Ovary (tissue), 10 donors: ENCODE measurements at regions of chr1 and their contacts with region 1.

Region 1: GRCh38 chr1:205477759-205478247 is 22.0 kb upstream of the BLACAT1 start:
- DNase-seq: peak in 2 of 5 donors; percentile 50 to 56
- H3K4me3 ChIP-seq: no peak overlapping the region
- H3K27ac ChIP-seq: no peak overlapping the region
- H3K4me1 ChIP-seq: peaks cover 5% of the 10 kb centered on the region
- H3K27me3 ChIP-seq: no peaks in the 10 kb centered on the region
- CTCF ChIP-seq: no peak
- EP300 ChIP-seq: no peak
- POLR2A ChIP-seq: no peak

Region 2: DNA sequence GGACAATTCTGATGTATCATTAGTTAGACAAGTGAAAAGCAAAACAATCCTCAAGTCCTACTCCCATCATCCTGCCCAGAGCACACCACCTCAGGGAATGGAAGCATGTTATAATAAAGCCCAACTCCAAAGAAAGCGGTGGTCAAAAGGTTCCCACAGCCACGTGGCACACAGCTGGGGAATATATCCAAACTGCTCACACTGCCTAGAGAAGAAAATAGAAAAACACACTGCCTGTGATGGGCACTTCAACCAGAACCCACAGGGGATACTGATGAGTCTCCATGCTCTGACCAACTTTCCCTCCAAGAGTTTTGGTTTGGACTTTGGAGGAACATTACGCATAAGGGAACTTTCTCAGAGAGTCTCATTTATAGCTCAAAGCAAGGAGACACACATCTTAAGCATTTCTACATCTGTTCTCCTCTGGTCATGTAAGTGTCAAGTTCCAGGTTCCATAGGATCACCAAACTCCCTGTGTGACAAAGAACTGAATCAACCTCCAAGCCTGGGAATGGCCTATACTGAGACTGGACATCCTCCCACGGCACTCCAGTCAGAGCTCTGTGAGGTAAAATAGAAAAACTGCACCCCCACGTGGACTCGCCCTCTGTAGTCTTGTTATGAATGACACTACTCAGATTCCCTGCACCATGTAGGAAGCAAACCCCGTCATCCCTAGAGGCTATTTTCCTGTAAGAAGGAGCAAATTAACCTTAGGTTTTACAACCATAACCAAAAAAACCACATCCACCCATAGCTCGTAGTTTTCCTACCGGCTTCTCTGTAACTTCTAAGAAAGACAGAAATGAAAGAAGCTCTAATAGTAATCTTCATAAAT is 278.5 kb before region 1 on chr1:
- intact Hi-C with region 1: no loop called
- DNase-seq: no peak
- H3K4me3 ChIP-seq: no peak overlapping the region
- H3K27ac ChIP-seq: no peak overlapping the region
- H3K4me1 ChIP-seq: peaks cover 5% of the 10 kb centered on the region
- H3K27me3 ChIP-seq: no peaks in the 10 kb centered on the region
- CTCF ChIP-seq: no peak
- EP300 ChIP-seq: no peak
- POLR2A ChIP-seq: no peak

Region 3: GRCh38 chr1:205335643-205336091 is 142.1 kb before region 1 on chr1:
- intact Hi-C with region 1: loop called in 2 of 4 experiments (anchors 5 kb)
- DNase-seq: peak; percentile 85 to 91 (median 86)
- H3K4me3 ChIP-seq: no peak overlapping the region
- H3K27ac ChIP-seq: no peak overlapping the region
- H3K4me1 ChIP-seq: peaks cover 5% of the 10 kb centered on the region
- H3K27me3 ChIP-seq: no peaks in the 10 kb centered on the region
- CTCF ChIP-seq: peak; percentile 91 to 95 (median 92)
- EP300 ChIP-seq: no peak
- POLR2A ChIP-seq: no peak

Region 4: GRCh38 chr1:205396967-205397616 is 80.7 kb before region 1 on chr1:
- intact Hi-C with region 1: loop called in 2 of 4 experiments (anchors 5 to 10 kb)
- DNase-seq: peak in 1 of 5 donors; percentile 44
- H3K4me3 ChIP-seq: no peak overlapping the region
- H3K27ac ChIP-seq: no peak overlapping the region
- H3K4me1 ChIP-seq: no peaks in the 10 kb centered on the region
- H3K27me3 ChIP-seq: no peaks in the 10 kb centered on the region
- CTCF ChIP-seq: peak; percentile 28 to 79 (median 78)
- EP300 ChIP-seq: no peak
- POLR2A ChIP-seq: no peak

Region 5: GRCh38 chr1:205416322-205416721 is 61.5 kb before region 1 on chr1:
- intact Hi-C with region 1: loop called in 1 of 4 experiments (anchors 10 kb)
- DNase-seq: no peak
- H3K4me3 ChIP-seq: no peak overlapping the region
- H3K27ac ChIP-seq: no peak overlapping the region
- H3K4me1 ChIP-seq: no peaks in the 10 kb centered on the region
- H3K27me3 ChIP-seq: no peaks in the 10 kb centered on the region
- CTCF ChIP-seq: no peak
- EP300 ChIP-seq: no peak
- POLR2A ChIP-seq: no peak

Region 6: DNA sequence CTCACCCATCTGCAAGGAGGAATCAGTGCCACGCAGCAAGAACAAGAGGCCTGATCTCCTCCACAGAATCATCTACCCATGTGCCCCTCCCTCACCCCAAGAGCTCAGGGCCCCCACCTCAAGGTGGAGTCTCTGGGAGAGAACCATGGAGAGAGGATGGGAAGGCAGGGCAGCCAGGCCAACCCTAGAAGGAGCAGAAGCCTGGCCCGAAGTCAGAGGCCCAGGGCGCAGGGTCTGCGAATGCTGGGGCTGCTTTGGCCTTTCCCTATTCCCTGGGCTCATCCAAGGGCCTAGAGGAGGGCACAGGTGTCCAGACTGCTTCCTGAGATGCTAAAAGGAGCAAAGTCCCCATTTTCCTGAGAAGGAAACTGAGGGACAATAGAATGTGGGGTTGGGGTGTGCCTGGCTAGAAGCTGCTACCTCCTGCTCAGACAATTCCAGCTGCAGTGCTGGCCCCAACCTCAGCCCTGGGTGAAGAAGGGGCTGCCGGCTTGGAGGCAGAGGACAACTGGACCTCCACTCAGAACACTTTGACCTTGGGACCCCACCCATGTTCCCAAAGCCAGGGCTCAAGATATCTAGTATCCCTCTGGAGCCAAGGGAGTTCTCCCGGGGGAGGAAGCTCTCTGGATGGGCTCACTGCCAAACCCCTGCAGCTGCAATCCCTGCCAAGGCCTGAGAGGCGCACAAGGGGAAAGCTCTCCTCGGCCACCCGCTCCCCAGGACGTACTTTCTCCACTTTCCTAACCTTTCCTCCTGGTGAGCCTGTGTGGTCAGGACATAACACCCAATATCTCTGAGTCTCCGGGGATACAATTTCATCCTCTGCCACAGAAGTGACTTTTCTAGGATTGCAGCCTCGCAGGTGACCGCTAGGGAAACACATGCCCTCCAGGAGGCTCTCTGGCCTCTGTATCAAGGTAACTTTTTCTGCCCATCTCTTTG is 39.3 kb before region 1 on chr1:
- intact Hi-C with region 1: loop called in 1 of 4 experiments (anchors 5 kb)
- DNase-seq: peak; percentile 91 to 93 (median 91)
- H3K4me3 ChIP-seq: no peak overlapping the region
- H3K27ac ChIP-seq: peak overlapping the region; percentile 27 to 31
- H3K4me1 ChIP-seq: peaks cover 12% of the 10 kb centered on the region
- H3K27me3 ChIP-seq: no peaks in the 10 kb centered on the region
- CTCF ChIP-seq: peak; percentile 67 to 90 (median 86)
- EP300 ChIP-seq: no peak
- POLR2A ChIP-seq: no peak

Region 7: GRCh38 chr1:206075786-206076755 is 598.3 kb after region 1 on chr1:
- intact Hi-C with region 1: no loop called
- DNase-seq: no peak
- H3K4me3 ChIP-seq: no peak overlapping the region
- H3K27ac ChIP-seq: no peak overlapping the region
- H3K4me1 ChIP-seq: no peaks in the 10 kb centered on the region
- H3K27me3 ChIP-seq: no peaks in the 10 kb centered on the region
- CTCF ChIP-seq: no peak
- EP300 ChIP-seq: no peak
- POLR2A ChIP-seq: no peak